ENCODE measurements at regions of chr14 and their contacts with region 1.

Region 1: DNA sequence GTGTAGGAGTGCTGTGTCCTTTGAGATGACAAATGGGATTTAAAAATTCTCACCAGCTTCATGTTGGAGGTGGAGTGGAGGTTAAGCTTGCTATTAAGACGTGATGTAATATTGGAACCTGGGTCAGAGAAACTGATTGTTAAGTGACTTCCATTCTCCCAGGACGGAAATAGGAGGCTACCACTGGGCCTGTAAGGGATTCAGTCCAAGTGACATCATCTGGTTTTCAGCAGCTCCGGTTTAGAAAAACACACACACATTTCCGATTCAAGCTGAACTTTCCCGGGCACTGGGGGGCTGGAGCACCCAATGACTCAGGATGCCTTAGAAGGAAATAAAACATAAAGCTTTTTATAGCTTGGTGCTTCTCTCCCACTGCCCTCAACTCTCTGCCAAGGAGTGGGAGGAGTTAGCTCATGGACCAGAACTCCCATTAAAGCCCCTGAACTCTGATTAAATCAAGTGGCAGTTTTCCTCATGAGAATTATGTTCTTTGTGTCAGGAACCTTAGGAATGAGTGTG is 12.4 kb downstream of the CALM1 start:
- DNase-seq: peak; percentile 99
- H3K4me3 ChIP-seq: no peak overlapping the region
- H3K27ac ChIP-seq: peak overlapping the region; percentile 92
- H3K4me1 ChIP-seq: peaks cover 37% of the 10 kb centered on the region
- H3K27me3 ChIP-seq: no peaks in the 10 kb centered on the region
- CTCF ChIP-seq: no peak
- POLR2A ChIP-seq: peak; percentile 61

Region 2: GRCh38 chr14:90319173-90319572 is 90.1 kb before region 1 on chr14:
- CTCF ChIA-PET with region 1: no interaction called
- POLR2A ChIA-PET with region 1: no interaction called
- dilution Hi-C with region 1: no loop called
- intact Hi-C with region 1: no loop called
- DNase-seq: no peak
- H3K4me3 ChIP-seq: no peak overlapping the region
- H3K27ac ChIP-seq: no peak overlapping the region
- H3K4me1 ChIP-seq: no peaks in the 10 kb centered on the region
- H3K27me3 ChIP-seq: no peaks in the 10 kb centered on the region
- CTCF ChIP-seq: no peak
- POLR2A ChIP-seq: no peak

Region 3: GRCh38 chr14:90426663-90427062 is 17.4 kb after region 1 on chr14:
- CTCF ChIA-PET with region 1: no interaction called
- POLR2A ChIA-PET with region 1: interaction called, 4 read pairs
- dilution Hi-C with region 1: no loop called
- intact Hi-C with region 1: loop called (anchors 1 kb)
- DNase-seq: peak; percentile 69
- H3K4me3 ChIP-seq: no peak overlapping the region
- H3K27ac ChIP-seq: no peak overlapping the region
- H3K4me1 ChIP-seq: peaks cover 21% of the 10 kb centered on the region
- H3K27me3 ChIP-seq: no peaks in the 10 kb centered on the region
- CTCF ChIP-seq: no peak
- POLR2A ChIP-seq: no peak

Region 4: GRCh38 chr14:90444036-90444696 is 34.9 kb after region 1 on chr14:
- CTCF ChIA-PET with region 1: interaction called, 3 read pairs
- POLR2A ChIA-PET with region 1: no interaction called
- dilution Hi-C with region 1: no loop called
- intact Hi-C with region 1: loop called (anchors 1 kb)
- DNase-seq: peak; percentile 75
- H3K4me3 ChIP-seq: no peak overlapping the region
- H3K27ac ChIP-seq: no peak overlapping the region
- H3K4me1 ChIP-seq: peaks cover 7% of the 10 kb centered on the region
- H3K27me3 ChIP-seq: no peaks in the 10 kb centered on the region
- CTCF ChIP-seq: no peak
- POLR2A ChIP-seq: no peak

Region 5: GRCh38 chr14:90454041-90455000 is 45.1 kb after region 1 on chr14:
- CTCF ChIA-PET with region 1: interaction called, 3 read pairs
- POLR2A ChIA-PET with region 1: no interaction called
- dilution Hi-C with region 1: no loop called
- intact Hi-C with region 1: loop called (anchors 1 kb)
- DNase-seq: peak; percentile 95
- H3K4me3 ChIP-seq: peak overlapping the region in 1 of 3 experiments; percentile 12
- H3K27ac ChIP-seq: no peak overlapping the region
- H3K4me1 ChIP-seq: peaks cover 3% of the 10 kb centered on the region
- H3K27me3 ChIP-seq: peaks cover 0 to 1% of the 10 kb centered on the region in 2 experiments
- CTCF ChIP-seq: peak in 1 of 2 donors; percentile 4
- POLR2A ChIP-seq: peak; percentile 27

Region 6: GRCh38 chr14:90518941-90519256 is 109.6 kb after region 1 on chr14:
- CTCF ChIA-PET with region 1: interaction called, 15 read pairs
- POLR2A ChIA-PET with region 1: no interaction called
- dilution Hi-C with region 1: no loop called
- intact Hi-C with region 1: loop called (anchors 2 kb)
- DNase-seq: peak; percentile 44
- H3K4me3 ChIP-seq: no peak overlapping the region
- H3K27ac ChIP-seq: no peak overlapping the region
- H3K4me1 ChIP-seq: no peaks in the 10 kb centered on the region
- H3K27me3 ChIP-seq: no peaks in the 10 kb centered on the region
- CTCF ChIP-seq: peak; percentile 58 to 75
- POLR2A ChIP-seq: no peak

Region 7: GRCh38 chr14:90850487-90850886 is 441.2 kb after region 1 on chr14:
- CTCF ChIA-PET with region 1: no interaction called
- POLR2A ChIA-PET with region 1: no interaction called
- dilution Hi-C with region 1: no loop called
- intact Hi-C with region 1: loop called (anchors 5 kb)
- DNase-seq: peak; percentile 82
- H3K4me3 ChIP-seq: no peak overlapping the region
- H3K27ac ChIP-seq: peak overlapping the region; percentile 91
- H3K4me1 ChIP-seq: peaks cover 20% of the 10 kb centered on the region
- H3K27me3 ChIP-seq: no peaks in the 10 kb centered on the region
- CTCF ChIP-seq: no peak
- POLR2A ChIP-seq: no peak

Region 8: DNA sequence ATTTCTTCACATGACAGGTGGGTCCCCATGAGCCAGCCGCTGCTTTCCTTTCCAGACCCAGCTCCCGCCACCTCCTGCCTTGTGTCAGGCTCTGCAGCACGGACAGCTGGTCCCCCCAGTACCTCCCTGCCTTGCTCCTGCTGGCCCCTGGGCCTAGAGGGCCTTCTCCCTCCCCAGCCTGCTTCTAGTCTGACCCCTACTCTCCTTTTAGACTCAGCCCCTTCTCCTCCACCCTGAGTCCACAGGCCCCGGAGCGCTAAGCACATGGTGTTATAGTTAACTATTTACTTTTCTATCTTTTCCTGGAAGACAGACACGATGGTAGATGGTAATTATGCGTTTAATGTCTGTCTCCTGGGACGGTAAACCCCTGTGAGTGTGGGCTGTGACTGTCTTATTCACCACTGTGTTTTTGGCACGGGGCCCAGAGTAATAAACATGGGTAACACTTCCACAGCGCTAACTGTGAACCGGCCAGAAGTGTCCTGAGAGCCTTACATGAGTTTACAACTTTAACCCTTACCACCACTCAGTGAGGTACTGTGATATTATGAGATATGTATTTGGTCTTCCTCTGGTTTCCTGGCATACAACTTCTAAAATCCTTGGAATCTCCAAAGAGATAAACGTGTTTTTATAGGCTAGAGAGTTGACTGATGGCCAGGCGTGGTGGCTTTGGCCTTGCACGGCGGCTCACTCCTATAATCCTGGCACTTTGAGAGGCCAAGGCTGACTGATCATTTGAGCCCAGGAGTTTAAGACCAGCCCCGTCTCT is 745.8 kb after region 1 on chr14:
- CTCF ChIA-PET with region 1: no interaction called
- POLR2A ChIA-PET with region 1: no interaction called
- dilution Hi-C with region 1: no loop called
- intact Hi-C with region 1: no loop called
- DNase-seq: peak; percentile 88
- H3K4me3 ChIP-seq: no peak overlapping the region
- H3K27ac ChIP-seq: no peak overlapping the region
- H3K4me1 ChIP-seq: peaks cover 9% of the 10 kb centered on the region
- H3K27me3 ChIP-seq: no peaks in the 10 kb centered on the region
- CTCF ChIP-seq: no peak
- POLR2A ChIP-seq: no peak